WTC11 (cell line): ENCODE measurements at regions of chr1 and their contacts with region 1.

Region 1: GRCh38 chr1:201119206-201120197 is 7.3 kb upstream of the CACNA1S start:
- DNase-seq: peak; percentile 77
- ATAC-seq: peak; percentile 74
- H3K4me3 Mint-ChIP-seq: no peak overlapping the region
- H3K27ac Mint-ChIP-seq: no peak overlapping the region
- H3K4me1 Mint-ChIP-seq: peaks cover 10% of the 10 kb centered on the region
- H3K27me3 Mint-ChIP-seq: peaks cover 53% of the 10 kb centered on the region
- CTCF ChIP-seq: peak; percentile 71

Region 2: DNA sequence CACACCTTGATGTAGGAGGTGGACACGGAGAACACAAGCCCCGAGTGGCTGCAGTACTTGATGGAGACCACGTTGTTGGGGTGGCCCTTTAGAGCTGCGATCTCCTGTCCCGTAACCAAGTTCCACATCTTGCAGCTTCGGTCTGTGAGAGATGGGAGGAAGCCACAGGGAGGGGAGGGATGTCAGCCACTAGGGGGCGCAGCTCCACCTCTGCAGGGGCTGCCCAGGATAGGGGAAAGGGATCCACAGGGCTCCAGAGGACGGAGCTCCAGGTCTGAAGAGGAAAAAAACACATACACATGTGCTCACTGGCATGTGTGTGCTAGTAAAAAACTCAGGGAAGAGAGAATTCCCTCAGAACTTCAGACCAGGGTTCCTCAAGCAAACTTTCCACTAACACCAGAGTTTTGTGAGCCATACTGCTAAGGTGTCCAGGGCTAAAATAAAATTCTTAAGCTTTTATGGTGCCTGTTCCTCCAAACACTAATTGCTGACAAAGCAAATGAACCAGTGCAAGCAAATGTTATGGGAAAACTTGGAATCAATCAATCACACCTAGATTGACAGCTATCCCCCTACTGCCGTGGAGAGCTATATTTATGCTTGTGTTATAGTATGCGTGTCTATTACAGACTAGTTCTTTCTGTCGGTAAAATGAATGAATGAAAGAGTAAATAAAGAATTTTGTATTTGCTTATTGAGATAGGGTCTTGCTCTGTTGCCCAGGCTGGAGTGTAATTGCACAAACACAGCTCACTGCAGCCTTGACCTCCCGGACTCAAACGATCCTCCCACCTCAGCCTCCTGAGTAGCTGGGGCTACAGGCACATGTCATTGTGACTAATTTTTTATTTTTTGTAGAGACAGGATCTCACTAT is 139.7 kb before region 1 on chr1:
- CTCF ChIA-PET with region 1: interaction called, 50 read pairs
- POLR2A ChIA-PET with region 1: interaction called, 3 read pairs
- DNase-seq: peak; percentile 90
- ATAC-seq: peak; percentile 97
- H3K4me3 Mint-ChIP-seq: no peak overlapping the region
- H3K27ac Mint-ChIP-seq: no peak overlapping the region
- H3K4me1 Mint-ChIP-seq: no peaks in the 10 kb centered on the region
- H3K27me3 Mint-ChIP-seq: no peaks in the 10 kb centered on the region; the same call in 1 of the 2 replicates
- CTCF ChIP-seq: peak; percentile 87

Region 3: DNA sequence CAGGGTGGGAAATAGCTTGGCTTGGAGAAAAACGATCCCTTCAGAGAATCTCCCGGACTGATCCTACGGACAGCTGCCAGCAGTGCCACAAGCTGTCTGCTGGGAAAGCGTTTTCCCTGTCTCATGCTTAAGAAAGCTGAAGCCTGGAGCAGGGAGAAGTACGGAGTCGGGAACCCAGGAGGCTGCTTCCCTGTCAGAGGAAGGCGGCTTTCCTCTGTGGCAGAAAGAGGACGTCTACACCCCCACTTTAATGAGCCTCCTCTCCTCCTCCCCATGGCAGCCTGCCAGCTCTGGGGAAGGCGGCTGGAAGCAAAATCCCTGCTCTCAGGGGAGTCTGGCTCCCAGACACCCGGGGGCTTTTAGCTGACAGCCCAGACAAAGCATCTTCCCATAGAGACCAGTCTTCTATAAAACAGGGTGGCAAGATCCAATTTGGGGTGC is 103.3 kb before region 1 on chr1:
- CTCF ChIA-PET with region 1: interaction called, 61 read pairs
- POLR2A ChIA-PET with region 1: no interaction called
- DNase-seq: no peak
- ATAC-seq: no peak
- H3K4me3 Mint-ChIP-seq: no peak overlapping the region
- H3K27ac Mint-ChIP-seq: no peak overlapping the region
- H3K4me1 Mint-ChIP-seq: peaks cover 51% of the 10 kb centered on the region
- H3K27me3 Mint-ChIP-seq: no peaks in the 10 kb centered on the region
- CTCF ChIP-seq: no peak

Region 4: DNA sequence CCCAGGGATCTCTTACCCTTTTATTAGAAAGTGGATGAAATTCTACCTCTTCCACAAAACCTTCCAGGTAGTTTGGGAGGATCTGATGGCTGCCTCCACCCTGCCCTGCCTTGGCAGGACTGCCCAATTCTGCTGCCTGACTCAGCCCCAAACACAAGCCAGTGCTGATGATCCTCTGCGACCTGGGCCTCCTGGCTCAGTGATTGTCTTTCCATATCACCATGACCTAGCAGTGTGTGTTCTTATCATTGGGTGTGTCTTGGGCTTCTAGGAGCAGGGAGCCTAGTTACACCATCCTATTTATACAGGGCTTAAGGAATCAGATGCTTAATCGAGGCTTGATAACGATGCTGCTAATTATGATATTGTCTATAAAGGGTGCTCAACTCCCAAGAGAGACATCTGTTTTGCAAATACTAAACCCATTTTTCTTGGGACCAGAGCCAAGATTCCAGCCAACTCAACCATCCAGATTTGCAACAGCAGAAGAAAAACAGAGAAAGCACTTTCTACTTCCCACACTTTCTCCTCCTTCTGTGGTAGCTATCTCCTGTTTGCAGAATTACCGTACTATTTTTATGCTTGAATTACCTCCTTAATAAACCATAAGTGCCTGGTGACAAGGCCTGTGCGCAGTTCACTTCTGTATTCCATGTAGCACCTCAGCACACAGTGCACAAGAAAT is 59.5 kb before region 1 on chr1:
- CTCF ChIA-PET with region 1: interaction called, 13 read pairs
- POLR2A ChIA-PET with region 1: no interaction called
- DNase-seq: no peak
- ATAC-seq: no peak
- H3K4me3 Mint-ChIP-seq: no peak overlapping the region
- H3K27ac Mint-ChIP-seq: no peak overlapping the region
- H3K4me1 Mint-ChIP-seq: peaks cover 27% of the 10 kb centered on the region
- H3K27me3 Mint-ChIP-seq: no peaks in the 10 kb centered on the region
- CTCF ChIP-seq: no peak

Region 5: DNA sequence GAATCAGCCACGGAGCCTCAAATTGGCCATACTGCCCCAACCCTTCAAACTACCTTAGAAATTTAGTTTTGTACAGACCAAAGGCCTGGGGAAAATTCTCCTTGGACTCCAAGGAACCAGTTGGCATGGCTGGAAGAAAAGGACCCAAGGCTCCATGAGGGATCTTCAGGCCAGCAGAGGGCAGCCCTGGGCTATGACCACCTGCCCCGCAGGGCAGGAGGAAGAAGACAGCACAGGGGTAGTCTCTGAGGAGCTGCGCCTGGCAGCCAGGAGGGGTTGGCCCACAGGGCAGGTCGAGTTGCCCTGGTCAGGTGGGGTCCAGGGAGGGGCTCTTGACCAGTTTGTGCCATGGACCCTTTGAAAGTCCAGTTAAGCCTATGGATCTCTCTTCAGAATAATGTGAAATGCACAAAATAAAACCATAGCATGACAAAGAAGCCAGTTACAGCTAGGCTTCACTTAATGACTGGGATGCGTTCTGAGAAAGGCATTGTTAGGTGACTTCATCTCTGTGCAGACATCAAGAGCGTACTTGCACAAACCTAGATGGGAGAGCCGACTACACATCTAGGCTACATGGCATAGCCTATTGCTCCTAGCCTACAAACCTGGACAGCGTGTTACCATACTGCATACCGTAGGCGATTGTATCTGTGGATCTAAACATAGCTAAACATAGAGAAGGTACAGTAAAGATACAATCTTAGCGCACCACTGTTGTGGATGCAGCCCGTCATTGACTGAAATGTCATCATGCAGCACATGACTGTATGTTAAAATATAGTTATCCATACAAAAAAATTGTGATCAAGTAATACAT is 33.4 kb before region 1 on chr1:
- CTCF ChIA-PET with region 1: interaction called, 124 read pairs
- POLR2A ChIA-PET with region 1: no interaction called
- DNase-seq: peak; percentile 76
- ATAC-seq: peak; percentile 97
- H3K4me3 Mint-ChIP-seq: no peak overlapping the region
- H3K27ac Mint-ChIP-seq: no peak overlapping the region
- H3K4me1 Mint-ChIP-seq: peaks cover 6% of the 10 kb centered on the region; the same call in 1 of the 2 replicates
- H3K27me3 Mint-ChIP-seq: no peaks in the 10 kb centered on the region
- CTCF ChIP-seq: peak; percentile 35; the same call in 1 of the 2 replicates

Region 6: DNA sequence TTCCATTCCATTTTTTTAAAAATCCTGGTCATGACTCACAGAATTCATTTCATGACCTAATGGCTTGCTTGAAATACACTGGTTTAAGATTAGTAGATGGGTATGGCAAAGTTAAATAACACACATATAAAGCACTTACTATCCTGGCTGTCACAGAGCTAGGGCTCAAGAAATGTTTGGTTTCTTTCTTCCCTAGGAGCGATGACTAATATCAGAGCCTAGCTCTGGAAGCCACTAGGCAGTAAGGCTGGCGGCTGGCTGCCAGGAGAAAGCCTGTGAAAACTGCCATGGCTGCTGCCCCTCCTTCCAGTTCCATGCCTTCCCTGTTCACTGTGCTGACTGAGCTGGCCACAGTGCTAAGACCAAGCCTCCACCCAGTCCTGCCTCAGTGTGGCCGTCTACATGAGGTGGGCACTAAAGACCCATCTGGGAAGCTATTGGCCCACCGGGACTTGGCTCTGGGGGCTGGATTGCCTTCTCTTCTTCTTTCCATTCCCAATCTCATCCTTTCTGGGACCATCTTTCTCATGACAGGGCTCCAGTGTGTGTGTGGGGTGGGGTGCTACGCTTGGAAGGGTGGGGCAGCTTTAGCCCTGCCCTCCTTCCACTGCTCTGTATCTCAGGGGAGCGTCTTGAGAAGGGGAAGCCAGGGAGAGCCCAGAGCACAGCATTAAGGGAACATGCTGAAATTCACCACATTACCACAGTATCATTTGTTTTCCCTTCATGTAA is 18.2 kb after region 1 on chr1:
- CTCF ChIA-PET with region 1: interaction called, 10 read pairs
- POLR2A ChIA-PET with region 1: no interaction called
- DNase-seq: no peak
- ATAC-seq: no peak
- H3K4me3 Mint-ChIP-seq: no peak overlapping the region
- H3K27ac Mint-ChIP-seq: no peak overlapping the region
- H3K4me1 Mint-ChIP-seq: no peaks in the 10 kb centered on the region
- H3K27me3 Mint-ChIP-seq: no peaks in the 10 kb centered on the region; the same call in 1 of the 2 replicates
- CTCF ChIP-seq: no peak

Region 7: DNA sequence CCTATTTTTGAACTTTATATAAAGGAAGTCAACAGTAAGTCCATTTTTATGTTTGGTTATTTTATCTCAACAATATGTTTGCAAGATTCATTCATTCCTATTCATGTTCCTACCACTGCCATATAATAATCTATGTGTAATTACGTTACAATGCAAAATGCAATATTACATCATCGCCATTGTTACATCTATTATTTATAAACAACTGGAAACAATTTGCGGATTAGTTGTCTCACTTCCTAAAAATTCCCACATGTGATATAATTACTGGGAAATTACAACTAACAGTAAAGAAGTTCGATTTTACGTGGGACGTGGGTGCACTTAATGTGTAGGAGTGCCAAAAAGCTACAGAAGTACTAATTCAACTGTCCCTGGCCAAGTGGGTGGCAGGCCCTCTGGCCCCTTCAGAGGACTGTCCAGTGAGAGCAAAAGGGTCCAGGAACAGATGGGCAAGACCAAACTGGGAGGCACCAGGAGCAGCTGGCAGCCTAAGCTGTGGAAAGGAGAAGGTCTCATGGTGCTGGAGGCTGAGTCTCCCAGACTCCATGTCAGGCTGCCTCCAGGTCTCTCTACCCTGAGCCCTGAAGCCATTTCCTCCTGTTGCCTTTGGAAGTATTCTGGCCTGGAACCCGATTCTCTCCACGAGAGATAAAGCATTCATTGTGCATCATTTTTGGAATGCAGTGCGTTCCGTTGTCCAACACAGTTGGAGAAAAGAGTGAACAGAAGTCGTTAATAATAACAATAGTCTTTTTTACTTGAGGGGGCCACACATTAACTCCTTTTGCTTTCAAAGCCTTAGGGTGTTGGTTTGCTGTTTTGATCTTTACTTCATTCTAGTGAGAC is 215.0 kb after region 1 on chr1:
- CTCF ChIA-PET with region 1: no interaction called
- POLR2A ChIA-PET with region 1: no interaction called
- DNase-seq: no peak
- ATAC-seq: no peak
- H3K4me3 Mint-ChIP-seq: no peak overlapping the region
- H3K27ac Mint-ChIP-seq: no peak overlapping the region
- H3K4me1 Mint-ChIP-seq: no peaks in the 10 kb centered on the region
- H3K27me3 Mint-ChIP-seq: no peaks in the 10 kb centered on the region
- CTCF ChIP-seq: no peak